HCT116 (cell line): ENCODE measurements at regions of chr12 and their contacts with region 1.

Region 1: GRCh38 chr12:12837025-12837872 is 24.1 kb downstream of the DDX47 start:
- DNase-seq: peak; percentile 67
- ATAC-seq: peak; percentile 38
- H3K4me3 ChIP-seq: no peak overlapping the region
- H3K27ac ChIP-seq: peak overlapping the region; percentile 85
- H3K4me1 ChIP-seq: peaks cover 77 to 99% of the 10 kb centered on the region in 2 experiments
- H3K27me3 ChIP-seq: no peaks in the 10 kb centered on the region
- CTCF ChIP-seq: peak; percentile 43 to 77 (median 71); a peak in 5 of 6 replicates
- POLR2A ChIP-seq: no peak
- RAD21 ChIP-seq: peak; percentile 86

Region 2: GRCh38 chr12:12872139-12872881 is 35.1 kb after region 1 on chr12:
- CTCF ChIA-PET with region 1: interaction called, 18 read pairs
- POLR2A ChIA-PET with region 1: interaction called, 30 read pairs
- RAD21 ChIA-PET with region 1: interaction called, 5 to 6 read pairs
- intact Hi-C with region 1: loop called (anchors 2 kb)
- DNase-seq: peak; percentile 87
- ATAC-seq: peak; percentile 71
- H3K4me3 ChIP-seq: peak overlapping the region; percentile 24 to 42
- H3K27ac ChIP-seq: peak overlapping the region; percentile 88
- H3K4me1 ChIP-seq: peaks cover 68 to 91% of the 10 kb centered on the region in 2 experiments
- H3K27me3 ChIP-seq: no peaks in the 10 kb centered on the region
- CTCF ChIP-seq: no peak
- POLR2A ChIP-seq: no peak
- RAD21 ChIP-seq: peak; percentile 24; the same call in 1 of the 2 replicates

Region 3: DNA sequence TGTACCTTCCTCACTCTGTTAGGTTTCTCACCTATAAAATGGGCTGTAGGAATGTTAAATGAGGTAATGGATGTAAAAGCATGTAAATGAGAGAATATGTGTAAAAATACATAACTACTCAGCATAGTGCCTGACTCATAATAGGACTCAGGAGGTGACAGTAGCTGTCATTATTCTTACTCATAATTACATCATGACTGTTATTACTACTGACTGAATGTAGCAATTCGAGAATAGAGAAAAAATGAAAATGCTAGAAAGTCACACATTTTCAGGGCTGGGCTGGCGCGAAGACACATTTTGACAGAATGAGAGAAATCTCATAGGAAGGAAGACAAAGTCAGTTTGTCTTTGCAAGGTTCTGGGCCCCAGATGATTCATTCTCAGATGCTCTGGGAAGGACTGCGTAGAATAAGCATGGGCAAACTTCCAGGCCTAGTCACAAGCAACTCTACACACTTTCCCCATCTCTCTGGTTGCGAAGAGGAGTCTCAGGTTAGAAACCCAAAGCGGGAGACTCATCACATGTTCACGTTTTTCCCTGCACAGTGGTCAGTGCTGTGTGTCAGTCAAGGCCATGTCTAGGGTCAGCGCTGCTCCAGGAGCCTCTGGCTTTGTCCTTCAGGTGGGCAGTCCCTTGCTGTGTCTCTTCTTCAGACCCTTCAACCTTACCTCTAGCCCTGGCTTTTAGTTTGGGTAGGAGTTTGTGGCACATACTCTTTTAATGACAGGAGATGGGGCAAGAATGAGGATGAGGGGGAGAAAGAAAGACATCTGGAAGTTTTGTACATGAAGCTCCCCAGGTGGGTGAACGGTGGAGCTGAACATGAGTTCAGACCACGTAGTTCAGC is 62.5 kb after region 1 on chr12:
- CTCF ChIA-PET with region 1: interaction called, 4 read pairs
- POLR2A ChIA-PET with region 1: interaction called, 18 read pairs
- RAD21 ChIA-PET with region 1: interaction called, 3 read pairs
- intact Hi-C with region 1: no loop called
- DNase-seq: no peak
- ATAC-seq: peak; percentile 9; the same call in 1 of the 2 replicates
- H3K4me3 ChIP-seq: peak overlapping the region in 1 of 2 experiments; percentile 1; a peak in 1 of 4 replicates
- H3K27ac ChIP-seq: peak overlapping the region; percentile 65
- H3K4me1 ChIP-seq: peaks cover 94 to 98% of the 10 kb centered on the region in 2 experiments
- H3K27me3 ChIP-seq: no peaks in the 10 kb centered on the region
- CTCF ChIP-seq: no peak
- POLR2A ChIP-seq: no peak
- RAD21 ChIP-seq: 0 out of 2 replicates have a peak, but pooled peaks have one; percentile 4

Region 4: DNA sequence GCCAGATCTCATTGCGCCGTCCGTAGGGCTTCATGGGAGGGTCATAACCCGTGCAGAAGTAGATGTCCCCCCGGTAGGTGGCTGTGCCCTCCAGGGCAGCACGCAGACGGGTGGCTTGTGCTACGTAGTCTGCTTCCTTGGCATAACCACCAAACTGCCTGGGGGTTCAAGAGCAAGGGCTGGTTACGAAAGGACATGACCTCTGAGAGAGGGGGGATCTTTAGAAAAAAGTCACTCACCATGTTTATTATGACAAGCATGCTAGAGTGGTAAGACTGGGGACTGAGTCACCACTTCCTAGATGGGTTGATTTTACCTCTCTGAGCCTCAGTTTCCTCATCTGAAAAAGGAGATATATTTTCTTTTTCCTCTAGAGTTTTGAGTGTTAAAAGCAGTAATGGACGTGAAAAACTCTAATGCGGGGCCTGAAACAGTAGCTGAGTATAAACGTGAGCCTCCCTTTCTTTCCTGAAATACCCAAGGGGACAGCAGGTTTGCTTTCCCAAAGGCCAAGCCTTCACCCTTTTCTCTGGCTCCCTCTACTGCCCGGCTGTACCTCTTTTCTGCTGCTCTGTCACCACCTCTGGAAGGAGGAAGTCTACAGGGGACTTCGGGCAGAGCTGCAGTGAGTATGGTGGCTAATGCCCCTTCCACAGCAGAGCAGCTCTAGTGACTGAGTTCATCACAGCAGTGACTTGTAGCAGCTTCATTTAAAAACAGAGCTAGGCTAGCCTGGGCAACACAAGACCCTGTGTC is 138.3 kb after region 1 on chr12:
- CTCF ChIA-PET with region 1: interaction called, 10 read pairs
- POLR2A ChIA-PET with region 1: no interaction called
- RAD21 ChIA-PET with region 1: no interaction called
- intact Hi-C with region 1: no loop called
- DNase-seq: peak; percentile 29
- ATAC-seq: peak; percentile 94
- H3K4me3 ChIP-seq: no peak overlapping the region
- H3K27ac ChIP-seq: no peak overlapping the region
- H3K4me1 ChIP-seq: peaks cover 0 to 12% of the 10 kb centered on the region in 2 experiments; a peak in 1 of 4 replicates
- H3K27me3 ChIP-seq: no peaks in the 10 kb centered on the region
- CTCF ChIP-seq: peak; percentile 69 to 78 (median 74)
- POLR2A ChIP-seq: no peak
- RAD21 ChIP-seq: peak; percentile 87

Region 5: GRCh38 chr12:12983420-12984035 is 146.3 kb after region 1 on chr12:
- CTCF ChIA-PET with region 1: interaction called, 5 read pairs
- POLR2A ChIA-PET with region 1: no interaction called
- RAD21 ChIA-PET with region 1: no interaction called
- intact Hi-C with region 1: loop called (anchors 2 kb)
- DNase-seq: peak; percentile 33
- ATAC-seq: peak; percentile 81
- H3K4me3 ChIP-seq: no peak overlapping the region
- H3K27ac ChIP-seq: no peak overlapping the region
- H3K4me1 ChIP-seq: no peaks in the 10 kb centered on the region
- H3K27me3 ChIP-seq: no peaks in the 10 kb centered on the region
- CTCF ChIP-seq: peak; percentile 59 to 79 (median 69); a peak in 5 of 6 replicates
- POLR2A ChIP-seq: no peak
- RAD21 ChIP-seq: peak; percentile 85

Region 6: DNA sequence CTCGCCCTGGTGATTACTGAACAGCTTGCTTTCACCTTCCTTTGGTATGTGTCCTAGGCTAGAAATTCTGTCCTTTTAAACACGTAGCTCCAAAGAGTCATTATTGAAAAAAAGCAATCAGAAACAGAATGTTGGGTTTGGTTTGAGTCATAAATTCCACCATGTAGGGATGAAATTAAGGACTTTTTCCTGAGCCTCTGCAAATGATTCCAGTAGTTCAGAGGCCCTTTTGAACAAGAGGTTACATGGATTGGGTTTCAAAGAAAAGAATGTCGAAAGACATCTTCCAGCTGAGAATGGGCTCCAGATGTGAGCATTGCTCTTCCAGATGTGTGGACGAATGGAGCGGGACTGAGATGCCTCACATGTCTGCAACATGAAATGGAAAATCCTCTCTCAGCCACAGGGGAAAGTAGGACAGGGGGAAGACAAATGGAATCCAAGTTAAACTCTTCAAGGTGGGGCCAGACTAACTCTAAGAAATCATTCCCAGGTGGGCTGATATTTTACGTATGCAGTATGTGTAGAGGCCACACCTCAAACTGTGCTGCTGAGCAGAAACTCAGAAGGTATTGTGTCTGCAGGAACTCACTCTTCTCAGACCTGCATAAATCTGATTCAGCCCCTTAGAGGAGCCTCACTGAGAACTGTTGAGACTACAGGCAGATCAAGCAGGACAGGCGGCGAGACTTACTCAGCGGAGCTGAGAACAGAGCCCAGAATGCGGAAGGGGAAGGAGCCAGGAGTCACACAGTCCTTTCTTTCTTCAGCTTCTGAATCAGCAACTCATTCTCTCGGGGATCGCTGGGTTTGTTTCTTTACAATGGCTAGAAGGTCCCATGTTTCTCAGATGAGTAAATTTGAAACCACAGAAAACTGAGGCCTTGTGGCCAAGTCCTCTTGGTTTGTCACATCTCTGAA is 336.0 kb after region 1 on chr12:
- CTCF ChIA-PET with region 1: no interaction called
- POLR2A ChIA-PET with region 1: no interaction called
- RAD21 ChIA-PET with region 1: no interaction called
- intact Hi-C with region 1: no loop called
- DNase-seq: peak; percentile 72
- ATAC-seq: peak; percentile 73
- H3K4me3 ChIP-seq: peak overlapping the region in 1 of 2 experiments; percentile 18; a peak in 2 of 4 replicates
- H3K27ac ChIP-seq: peak overlapping the region; percentile 76
- H3K4me1 ChIP-seq: peaks cover 53 to 96% of the 10 kb centered on the region in 2 experiments
- H3K27me3 ChIP-seq: no peaks in the 10 kb centered on the region
- CTCF ChIP-seq: no peak
- POLR2A ChIP-seq: no peak
- RAD21 ChIP-seq: peak; percentile 27; the same call in 1 of the 2 replicates